MCF 10A (cell line): ENCODE measurements at regions of chr15 and their contacts with region 1.

Region 1: DNA sequence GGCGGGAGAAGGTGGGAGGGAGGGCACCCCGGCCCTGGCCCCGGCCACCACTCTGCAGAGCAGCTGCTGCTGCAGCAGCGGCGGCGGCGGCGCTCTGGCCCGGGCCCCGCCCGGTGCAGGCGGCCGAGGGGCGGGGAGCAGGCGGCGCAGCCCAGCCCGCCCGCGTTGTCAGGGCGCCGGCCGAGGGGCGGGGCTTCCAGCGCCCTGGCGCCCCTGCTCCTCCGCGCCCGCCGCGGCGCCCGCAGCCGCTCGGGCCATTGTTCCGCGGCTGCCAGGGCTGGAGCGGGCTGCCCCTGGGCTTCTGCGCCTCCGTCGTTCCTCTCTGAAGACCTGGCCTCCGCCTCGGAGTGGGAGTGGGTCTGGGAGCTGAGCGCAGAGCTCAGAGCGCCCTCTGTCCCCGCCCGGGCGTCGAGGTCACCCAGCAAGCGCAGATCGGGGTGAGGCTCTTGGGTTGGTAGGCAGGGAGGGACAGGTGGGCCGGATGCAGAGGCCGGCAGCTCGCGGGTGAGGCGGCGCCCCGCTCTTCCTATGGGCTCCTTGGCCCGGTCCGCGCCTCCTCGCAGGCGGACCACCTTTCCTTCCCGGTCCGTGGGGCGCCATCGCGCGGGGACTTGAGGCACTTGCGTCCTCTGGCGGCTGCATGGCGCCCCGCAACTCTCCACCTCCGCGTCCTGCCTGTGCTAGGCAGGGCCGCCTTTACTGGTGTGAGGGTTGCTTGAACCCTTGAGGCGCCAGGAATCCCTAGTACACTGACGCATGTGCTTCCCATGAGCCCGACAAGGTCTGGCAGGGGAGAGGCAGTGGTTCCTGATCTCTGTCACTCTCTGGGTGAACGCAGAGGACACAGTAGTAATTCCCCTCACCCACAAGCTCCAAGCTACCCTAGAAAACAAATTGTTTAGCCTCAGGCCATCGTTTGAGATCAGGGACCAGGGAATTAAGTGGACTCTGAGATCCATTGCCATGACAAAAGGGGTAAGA is at the start of gene LPCAT4:
- DNase-seq: peak; percentile 84
- H3K4me3 Mint-ChIP-seq: peak within 1 kb of the TSS; percentile 79
- H3K27ac Mint-ChIP-seq: peak within 1 kb of the TSS; percentile 70
- H3K4me1 Mint-ChIP-seq: peaks cover 20% of the 10 kb centered on the region
- H3K27me3 Mint-ChIP-seq: no peaks in the 10 kb centered on the region
- CTCF ChIP-seq: peak; percentile 91
- total RNA-seq, gene LPCAT4: 17.0 and 17.4 TPM in 2 replicates

Region 2: GRCh38 chr15:33801954-33802353 is 565.4 kb before region 1 on chr15:
- CTCF ChIA-PET with region 1: no interaction called
- POLR2A ChIA-PET with region 1: no interaction called
- intact Hi-C with region 1: no loop called
- DNase-seq: no peak
- H3K4me3 Mint-ChIP-seq: no peak overlapping the region
- H3K27ac Mint-ChIP-seq: no peak overlapping the region
- H3K4me1 Mint-ChIP-seq: no peaks in the 10 kb centered on the region
- H3K27me3 Mint-ChIP-seq: peaks cover 47% of the 10 kb centered on the region
- CTCF ChIP-seq: no peak

Region 3: GRCh38 chr15:33926260-33926659 is 441.1 kb before region 1 on chr15:
- CTCF ChIA-PET with region 1: no interaction called
- POLR2A ChIA-PET with region 1: no interaction called
- intact Hi-C with region 1: no loop called
- DNase-seq: no peak
- H3K4me3 Mint-ChIP-seq: no peak overlapping the region
- H3K27ac Mint-ChIP-seq: no peak overlapping the region
- H3K4me1 Mint-ChIP-seq: no peaks in the 10 kb centered on the region
- H3K27me3 Mint-ChIP-seq: no peaks in the 10 kb centered on the region
- CTCF ChIP-seq: no peak

Region 4: GRCh38 chr15:34065941-34066340 is 301.4 kb before region 1 on chr15:
- CTCF ChIA-PET with region 1: interaction called, 10 read pairs
- POLR2A ChIA-PET with region 1: no interaction called
- intact Hi-C with region 1: loop called (anchors 1 kb)
- DNase-seq: peak; percentile 11
- H3K4me3 Mint-ChIP-seq: no peak overlapping the region
- H3K27ac Mint-ChIP-seq: no peak overlapping the region
- H3K4me1 Mint-ChIP-seq: peaks cover 6% of the 10 kb centered on the region
- H3K27me3 Mint-ChIP-seq: no peaks in the 10 kb centered on the region
- CTCF ChIP-seq: no peak

Region 5: GRCh38 chr15:34223904-34224596 is 143.3 kb before region 1 on chr15:
- CTCF ChIA-PET with region 1: interaction called, 5 read pairs
- POLR2A ChIA-PET with region 1: interaction called, 17 read pairs
- intact Hi-C with region 1: no loop called
- DNase-seq: peak; percentile 11
- H3K4me3 Mint-ChIP-seq: peak overlapping the region; percentile 99
- H3K27ac Mint-ChIP-seq: peak overlapping the region; percentile 99
- H3K4me1 Mint-ChIP-seq: peaks cover 5% of the 10 kb centered on the region
- H3K27me3 Mint-ChIP-seq: no peaks in the 10 kb centered on the region
- CTCF ChIP-seq: no peak

Region 6: GRCh38 chr15:34318277-34319079 is 48.9 kb before region 1 on chr15:
- CTCF ChIA-PET with region 1: interaction called, 9 read pairs
- POLR2A ChIA-PET with region 1: interaction called, 24 read pairs
- intact Hi-C with region 1: no loop called
- DNase-seq: peak; percentile 77
- H3K4me3 Mint-ChIP-seq: peak overlapping the region; percentile 86
- H3K27ac Mint-ChIP-seq: peak overlapping the region; percentile 96
- H3K4me1 Mint-ChIP-seq: peaks cover 21% of the 10 kb centered on the region
- H3K27me3 Mint-ChIP-seq: no peaks in the 10 kb centered on the region
- CTCF ChIP-seq: no peak

Region 7: DNA sequence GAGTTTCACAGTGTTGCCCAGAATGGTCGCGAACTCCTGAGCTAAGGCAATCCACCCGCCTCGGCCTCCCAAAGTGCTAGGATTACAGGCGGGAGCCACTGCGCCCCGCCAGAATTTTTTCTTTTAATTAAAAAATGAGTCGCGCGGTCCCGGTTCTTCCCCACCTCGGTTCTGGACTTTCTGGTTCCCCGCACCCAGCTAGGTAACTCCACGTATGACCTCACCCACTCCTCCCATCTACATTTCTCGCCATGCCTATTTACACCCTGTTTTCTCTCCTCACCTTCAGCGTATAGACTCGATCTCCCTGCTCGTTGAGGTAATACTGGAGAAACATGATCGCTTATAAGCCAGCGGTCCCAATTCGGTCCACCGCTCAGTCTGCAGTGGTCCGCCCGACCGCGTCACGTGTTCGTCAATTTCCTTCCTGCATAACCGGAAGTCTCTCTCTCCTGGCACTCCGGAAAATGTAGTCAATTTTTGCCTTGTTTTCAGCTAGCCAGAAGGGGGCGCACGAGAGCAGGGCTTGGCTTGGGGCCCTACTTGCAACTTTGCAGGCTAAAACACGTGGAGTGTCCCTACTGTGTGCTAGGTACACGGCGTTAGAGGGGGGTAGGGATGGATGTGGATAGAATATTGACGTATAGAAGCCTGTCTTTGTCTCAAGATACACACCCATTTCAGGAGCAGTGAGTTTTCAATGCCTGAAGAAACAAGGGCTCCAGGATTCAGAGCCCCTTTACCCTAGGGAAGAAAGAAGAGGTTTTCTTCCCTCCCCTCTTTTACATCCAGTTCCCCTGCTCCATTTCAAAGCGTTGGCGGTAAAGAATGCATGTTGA is 24.4 kb before region 1 on chr15 and contains the starts of genes NOP10 and NUTM1:
- CTCF ChIA-PET with region 1: interaction called, 24 read pairs
- POLR2A ChIA-PET with region 1: interaction called, 44 read pairs
- intact Hi-C with region 1: loop called (anchors 1 kb)
- DNase-seq: peak; percentile 91
- H3K4me3 Mint-ChIP-seq: no peak within 1 kb of the TSS
- H3K27ac Mint-ChIP-seq: no peak within 1 kb of the TSS
- H3K4me1 Mint-ChIP-seq: peaks cover 5% of the 10 kb centered on the region
- H3K27me3 Mint-ChIP-seq: peaks cover 2% of the 10 kb centered on the region
- CTCF ChIP-seq: peak; percentile 91
- total RNA-seq, gene NOP10: 168 and 187 TPM in 2 replicates
- total RNA-seq, gene NUTM1: not detected in 2 replicates